A673 (cell line): ENCODE measurements at regions of chr2 and their contacts with region 1.

Region 1: DNA sequence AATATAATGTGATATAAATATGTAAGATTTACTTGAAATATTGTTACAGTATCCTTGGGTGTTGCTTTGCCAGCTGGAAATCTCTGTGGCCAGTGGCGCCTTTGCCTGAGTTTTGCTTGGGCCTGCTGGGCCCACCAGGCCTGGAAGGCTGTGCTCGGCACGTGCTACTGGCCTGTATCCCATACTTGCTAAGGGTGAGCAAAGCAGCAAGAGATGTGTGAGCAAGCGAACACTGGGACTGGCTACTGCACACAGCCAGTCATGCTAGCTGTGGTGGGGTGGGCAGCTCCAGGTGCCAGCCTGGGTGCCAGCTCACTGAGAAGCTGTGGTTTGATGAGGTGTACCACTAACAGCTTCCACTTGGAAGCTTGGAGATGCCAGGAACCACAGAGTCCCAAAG is 299.1 kb upstream of the GALNT5 start:
- DNase-seq: no peak
- H3K4me3 ChIP-seq: no peak overlapping the region
- H3K27ac ChIP-seq: no peak overlapping the region
- H3K4me1 ChIP-seq: no peaks in the 10 kb centered on the region
- H3K27me3 ChIP-seq: no peaks in the 10 kb centered on the region
- CTCF ChIP-seq: no peak

Region 2: DNA sequence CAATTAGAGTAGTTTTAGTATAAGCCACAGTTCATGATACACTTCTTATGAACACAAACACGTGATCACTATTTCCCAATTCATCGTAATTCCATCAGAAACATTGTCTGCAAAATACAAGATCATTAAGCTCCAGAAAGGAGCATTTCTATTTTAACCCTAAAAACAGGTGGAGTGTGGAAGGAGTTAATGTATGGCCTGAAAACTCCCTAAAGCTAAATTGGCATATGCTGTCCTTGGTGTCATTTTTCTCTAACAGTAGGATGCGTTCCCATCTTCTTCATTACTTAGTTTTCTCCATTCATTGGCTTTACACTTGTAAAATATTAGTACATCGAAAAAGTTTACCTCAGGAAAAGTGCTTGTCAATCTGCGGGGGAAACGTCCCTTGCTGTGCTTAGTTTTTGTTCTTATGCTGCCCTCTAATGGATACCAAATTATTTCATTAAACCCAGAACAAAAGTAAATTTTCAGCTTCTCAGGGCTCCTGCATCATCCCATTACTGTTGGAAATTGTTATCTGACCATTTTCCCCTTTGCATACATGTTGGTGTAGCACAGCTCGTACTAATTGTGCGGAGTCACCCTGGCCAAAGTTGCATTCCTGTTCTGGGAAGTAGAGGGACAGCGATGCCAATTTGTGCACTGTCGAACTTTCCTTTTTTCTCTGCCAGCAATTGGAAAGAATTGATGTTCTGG is 368.8 kb before region 1 on chr2:
- CTCF ChIA-PET with region 1: no interaction called
- POLR2A ChIA-PET with region 1: no interaction called
- intact Hi-C with region 1: no loop called
- DNase-seq: peak; percentile 56
- H3K4me3 ChIP-seq: no peak overlapping the region
- H3K27ac ChIP-seq: no peak overlapping the region
- H3K4me1 ChIP-seq: no peaks in the 10 kb centered on the region
- H3K27me3 ChIP-seq: no peaks in the 10 kb centered on the region
- CTCF ChIP-seq: peak; percentile 61

Region 3: DNA sequence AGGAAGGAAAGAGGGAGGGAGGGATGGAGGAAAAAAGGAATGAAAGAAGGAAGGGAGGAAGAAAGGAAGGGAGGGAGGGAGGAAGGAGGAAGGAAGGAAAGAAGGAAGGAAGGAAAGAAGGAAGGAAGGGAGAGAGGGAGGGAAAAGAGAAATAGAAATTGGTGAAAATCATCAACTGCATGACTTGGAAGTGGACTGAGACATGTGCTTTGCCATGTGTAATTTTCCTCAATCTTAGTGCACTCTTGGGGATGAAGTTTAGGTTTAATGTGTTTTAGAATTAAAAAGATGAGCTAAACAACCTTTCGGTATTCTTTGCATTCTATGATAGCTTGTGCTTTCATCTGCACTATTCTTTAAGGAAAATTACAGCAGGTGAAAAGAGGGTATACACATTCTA is 20.9 kb before region 1 on chr2:
- CTCF ChIA-PET with region 1: no interaction called
- POLR2A ChIA-PET with region 1: interaction called, 15 read pairs
- intact Hi-C with region 1: no loop called
- DNase-seq: no peak
- H3K4me3 ChIP-seq: no peak overlapping the region
- H3K27ac ChIP-seq: no peak overlapping the region
- H3K4me1 ChIP-seq: no peaks in the 10 kb centered on the region
- H3K27me3 ChIP-seq: no peaks in the 10 kb centered on the region
- CTCF ChIP-seq: no peak